ENCODE measurements at regions of chr1 and their contacts with region 1.

Region 1: GRCh38 chr1:200279810-200280411 is 129.9 kb downstream of the ZNF281 start:
- ATAC-seq: peak in 3 of 8 experiments; percentile 82 to 93 (median 88)
- H3K4me3 ChIP-seq: no peak overlapping the region
- H3K27ac ChIP-seq: no peak overlapping the region
- H3K4me1 ChIP-seq: no peaks in the 10 kb centered on the region

Region 2: DNA sequence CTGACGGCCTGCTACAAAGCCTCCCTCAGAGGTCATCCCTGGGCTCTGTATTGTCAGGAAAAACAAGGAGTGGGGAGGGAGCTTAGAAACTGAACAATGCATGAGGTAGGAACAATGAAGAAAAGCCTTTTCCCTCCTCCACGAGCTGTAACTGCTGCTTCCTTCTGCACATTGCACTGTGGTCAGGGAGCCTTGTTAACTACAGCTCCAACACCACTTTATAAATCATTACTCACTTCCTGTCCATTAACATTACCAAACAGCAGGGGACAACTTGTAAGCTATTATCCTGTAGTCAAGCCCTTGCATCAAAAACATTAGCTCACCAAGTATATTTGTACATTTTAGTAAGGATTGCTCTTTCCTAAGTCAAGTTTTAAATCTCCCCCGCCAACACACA is 588.4 kb before region 1 on chr1:
- in situ Hi-C with region 1: loop called in 1 of 9 experiments (anchors 10 kb)
- ATAC-seq: peak in 7 of 8 experiments; percentile 89 to 99 (median 91)
- H3K4me3 ChIP-seq: no peak overlapping the region
- H3K27ac ChIP-seq: no peak overlapping the region
- H3K4me1 ChIP-seq: peaks cover 22 to 25% of the 10 kb centered on the region in 2 donors

Region 3: DNA sequence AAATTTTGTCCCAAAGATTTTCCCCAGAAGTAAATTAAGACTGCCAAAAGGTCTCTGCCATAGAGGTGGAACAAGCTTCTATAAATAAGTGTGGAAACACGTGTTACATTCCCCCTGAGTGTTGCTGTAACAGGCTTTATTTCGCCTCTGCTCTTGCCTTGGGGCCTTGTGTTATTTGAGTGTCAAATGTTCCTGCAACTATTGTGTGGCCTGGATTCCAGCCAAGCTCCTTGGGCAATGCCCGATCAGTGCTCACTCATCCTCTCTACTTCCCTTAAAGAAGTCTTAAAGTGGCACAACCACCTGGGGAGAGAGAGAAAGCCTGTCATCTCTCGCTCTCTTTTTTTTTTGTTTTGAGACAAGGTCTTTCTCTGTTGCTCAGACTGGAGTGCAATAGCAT is 95.7 kb before region 1 on chr1:
- in situ Hi-C with region 1: no loop called
- ATAC-seq: peak in 6 of 8 experiments; percentile 39 to 96 (median 68)
- H3K4me3 ChIP-seq: no peak overlapping the region
- H3K27ac ChIP-seq: no peak overlapping the region
- H3K4me1 ChIP-seq: peaks cover 0 to 7% of the 10 kb centered on the region in 2 donors

Measured in motor neuron (in vitro differentiated cells).